H1 (cell line): ENCODE measurements at regions of chr10 and their contacts with region 1.

Region 1: GRCh38 chr10:32210306-32211045 is 136.5 kb downstream of the EPC1 start:
- DNase-seq: peak; percentile 2 to 66
- H3K4me3 ChIP-seq: no peak overlapping the region
- H3K27ac ChIP-seq: no peak overlapping the region
- H3K4me1 ChIP-seq: no peaks in the 10 kb centered on the region
- H3K27me3 ChIP-seq: no peaks in the 10 kb centered on the region
- CTCF ChIP-seq: peak; percentile 66 to 73 (median 71)
- EP300 ChIP-seq: no peak
- POLR2A ChIP-seq: no peak
- RAD21 ChIP-seq: peak; percentile 57 to 73

Region 2: DNA sequence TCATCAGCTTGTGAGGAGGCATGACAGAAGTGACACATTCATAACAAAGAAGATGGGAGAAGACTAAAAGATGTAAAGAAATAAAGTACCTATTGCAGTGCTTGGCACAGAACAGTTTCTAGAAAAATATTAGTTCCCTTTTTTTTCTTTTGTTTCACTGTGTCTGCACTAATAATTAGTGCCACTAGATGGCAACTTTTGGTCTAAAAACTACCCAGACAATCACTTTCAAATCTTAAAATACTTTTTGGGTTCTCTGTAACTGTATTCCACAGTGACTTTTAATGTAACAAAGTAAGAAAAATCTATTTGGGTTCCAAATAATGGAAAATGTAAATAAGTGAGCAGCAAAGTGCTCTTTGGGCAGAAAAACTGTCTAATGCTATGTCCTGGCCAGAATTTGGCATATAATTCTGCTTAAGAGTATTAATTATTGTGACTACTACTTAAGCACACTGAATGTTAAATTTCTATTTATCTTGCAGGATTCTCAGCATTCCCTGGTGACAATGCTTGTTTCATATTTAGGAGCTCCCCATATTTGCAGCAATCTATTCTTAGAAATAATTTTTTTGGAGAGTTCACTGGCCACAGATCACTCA is 19.5 kb before region 1 on chr10:
- CTCF ChIA-PET with region 1: interaction called, 17 read pairs
- POLR2A ChIA-PET with region 1: no interaction called
- DNase-seq: no peak
- H3K4me3 ChIP-seq: no peak overlapping the region
- H3K27ac ChIP-seq: no peak overlapping the region
- H3K4me1 ChIP-seq: no peaks in the 10 kb centered on the region
- H3K27me3 ChIP-seq: no peaks in the 10 kb centered on the region
- CTCF ChIP-seq: peak in 2 of 3 experiments; percentile 19 to 30; a peak in 2 of 4 replicates
- EP300 ChIP-seq: no peak
- POLR2A ChIP-seq: no peak
- RAD21 ChIP-seq: peak in 1 of 2 experiments; percentile 48

Region 3: DNA sequence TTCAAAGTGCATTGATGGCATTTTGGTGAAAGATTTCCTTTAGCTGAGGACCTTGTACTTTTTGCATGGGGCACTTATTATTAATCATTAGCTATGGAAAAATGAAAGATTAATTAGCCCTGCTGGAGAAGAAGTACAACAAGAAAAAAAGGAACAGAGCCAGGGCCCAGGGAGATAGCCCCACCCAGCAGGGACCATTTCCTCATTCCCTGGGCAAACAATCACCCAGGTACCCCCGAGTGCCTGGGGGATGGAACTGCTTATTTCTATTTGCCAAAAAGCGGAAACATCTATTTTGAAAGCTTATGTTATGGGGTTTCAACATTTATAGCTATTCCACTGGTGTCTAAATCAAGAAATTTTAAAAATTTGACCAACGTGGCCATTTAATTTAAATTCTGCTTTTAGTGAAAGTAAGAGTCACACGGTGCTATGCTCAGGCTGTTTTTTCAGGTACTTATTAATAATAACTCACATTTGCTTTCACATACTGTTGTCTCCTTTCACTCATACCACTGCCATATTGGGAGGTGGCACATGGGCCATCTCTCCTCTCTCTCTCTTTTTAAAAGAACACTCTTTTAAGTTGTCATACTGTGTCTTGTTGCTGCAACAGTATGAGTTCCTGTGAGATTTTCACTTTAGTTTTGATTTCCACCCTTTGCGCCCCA is 10.6 kb before region 1 on chr10:
- CTCF ChIA-PET with region 1: interaction called, 20 read pairs
- POLR2A ChIA-PET with region 1: no interaction called
- DNase-seq: no peak
- H3K4me3 ChIP-seq: no peak overlapping the region
- H3K27ac ChIP-seq: no peak overlapping the region
- H3K4me1 ChIP-seq: no peaks in the 10 kb centered on the region
- H3K27me3 ChIP-seq: no peaks in the 10 kb centered on the region
- CTCF ChIP-seq: no peak
- EP300 ChIP-seq: no peak
- POLR2A ChIP-seq: no peak
- RAD21 ChIP-seq: no peak

Region 4: GRCh38 chr10:32229170-32229569 is 18.7 kb after region 1 on chr10:
- CTCF ChIA-PET with region 1: interaction called, 11 read pairs
- POLR2A ChIA-PET with region 1: no interaction called
- DNase-seq: no peak
- H3K4me3 ChIP-seq: no peak overlapping the region
- H3K27ac ChIP-seq: no peak overlapping the region
- H3K4me1 ChIP-seq: no peaks in the 10 kb centered on the region; a peak in 1 of 7 replicates
- H3K27me3 ChIP-seq: no peaks in the 10 kb centered on the region
- CTCF ChIP-seq: no peak
- EP300 ChIP-seq: no peak
- POLR2A ChIP-seq: no peak
- RAD21 ChIP-seq: no peak

Region 5: DNA sequence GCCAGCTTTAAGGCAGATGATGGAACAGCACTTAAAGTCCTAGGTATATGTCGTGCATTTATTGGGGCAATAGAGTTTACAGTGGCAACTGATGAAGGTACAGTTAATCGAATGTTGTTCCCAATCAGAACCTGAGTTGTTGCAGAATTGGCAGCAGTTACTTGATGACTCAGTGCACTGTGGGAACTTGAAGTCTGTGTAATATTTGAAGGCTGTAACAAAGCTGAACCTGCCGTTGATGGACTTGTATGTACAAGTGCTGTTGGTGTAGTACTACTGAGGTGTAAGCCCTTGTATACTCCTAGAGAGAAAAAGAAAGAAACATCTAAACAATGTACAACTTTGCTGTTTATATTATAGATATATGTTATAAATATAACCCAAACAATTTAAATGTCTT is 61.1 kb after region 1 on chr10:
- CTCF ChIA-PET with region 1: no interaction called
- POLR2A ChIA-PET with region 1: no interaction called
- DNase-seq: no peak
- H3K4me3 ChIP-seq: no peak overlapping the region
- H3K27ac ChIP-seq: no peak overlapping the region
- H3K4me1 ChIP-seq: peaks cover 0 to 2% (median under 1%) of the 10 kb centered on the region in 4 experiments; a peak in 4 of 7 replicates
- H3K27me3 ChIP-seq: no peaks in the 10 kb centered on the region
- CTCF ChIP-seq: no peak
- EP300 ChIP-seq: no peak
- POLR2A ChIP-seq: no peak
- RAD21 ChIP-seq: no peak